Aorta (tissue), 5 donors: ENCODE measurements at regions of chr12 and their contacts with region 1.

Region 1: GRCh38 chr12:6268484-6269157 is 41.9 kb upstream of the PLEKHG6 start:
- DNase-seq: peak in 1 of 2 donors; percentile 83
- ATAC-seq: no peak
- H3K4me3 ChIP-seq: no peak overlapping the region
- H3K27ac ChIP-seq: no peak overlapping the region
- H3K4me1 ChIP-seq: no peaks in the 10 kb centered on the region
- H3K27me3 ChIP-seq: no peaks in the 10 kb centered on the region

Region 2: GRCh38 chr12:6224550-6224949 is 44.1 kb before region 1 on chr12:
- intact Hi-C with region 1: no loop called
- DNase-seq: peak; percentile 89 to 90
- ATAC-seq: peak; percentile 51
- H3K4me3 ChIP-seq: no peak overlapping the region
- H3K27ac ChIP-seq: peak overlapping the region; percentile 95 to 96
- H3K4me1 ChIP-seq: peaks cover 9 to 10% of the 10 kb centered on the region in 2 donors
- H3K27me3 ChIP-seq: no peaks in the 10 kb centered on the region

Region 3: DNA sequence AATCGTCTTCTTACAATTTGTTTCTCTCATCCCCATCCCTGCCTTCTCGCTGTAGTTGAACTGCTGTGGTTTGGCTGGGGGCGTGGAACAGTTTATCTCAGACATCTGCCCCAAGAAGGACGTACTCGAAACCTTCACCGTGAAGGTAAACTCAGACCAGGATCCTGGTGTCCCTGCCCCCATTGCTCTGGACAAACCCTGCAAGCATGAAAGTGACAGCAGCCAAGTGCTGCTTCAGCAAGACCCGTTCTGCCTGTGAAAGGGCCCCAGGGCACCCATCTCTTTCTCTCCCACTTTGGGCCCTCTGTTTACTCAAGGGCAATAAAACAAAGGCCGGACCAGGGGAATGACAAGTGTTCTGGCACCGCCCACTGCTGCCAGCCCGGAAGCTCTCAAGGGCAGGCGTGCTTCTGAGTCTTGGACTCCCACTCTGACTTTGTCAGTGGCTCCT is 33.2 kb before region 1 on chr12:
- intact Hi-C with region 1: loop called in 1 of 2 experiments (anchors 2 kb)
- DNase-seq: peak in 1 of 2 donors; percentile 37
- ATAC-seq: no peak
- H3K4me3 ChIP-seq: no peak overlapping the region
- H3K27ac ChIP-seq: no peak overlapping the region
- H3K4me1 ChIP-seq: peaks cover 0 to 1% of the 10 kb centered on the region in 2 donors
- H3K27me3 ChIP-seq: no peaks in the 10 kb centered on the region

Region 4: DNA sequence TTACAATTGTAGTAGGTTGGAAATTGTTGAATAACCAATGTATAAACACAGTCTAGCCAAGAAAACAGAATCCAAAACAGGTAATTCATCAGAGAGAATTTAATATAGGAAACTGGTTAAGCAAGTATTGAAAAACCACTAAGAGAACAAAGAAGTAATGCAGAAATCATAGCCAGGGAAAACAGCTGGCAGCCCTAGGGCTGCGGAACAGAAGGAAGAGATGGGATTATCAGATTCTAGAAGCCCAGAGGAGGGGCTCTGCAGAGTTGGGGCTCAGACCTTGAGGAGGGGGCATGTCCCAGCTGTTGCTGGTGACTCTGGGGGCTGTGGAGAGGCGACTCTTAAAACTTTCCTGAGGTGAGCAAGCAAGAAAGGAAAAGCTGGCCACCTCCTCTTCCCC is 19.0 kb before region 1 on chr12:
- intact Hi-C with region 1: no loop called
- DNase-seq: peak in 1 of 2 donors; percentile 17
- ATAC-seq: no peak
- H3K4me3 ChIP-seq: no peak overlapping the region
- H3K27ac ChIP-seq: no peak overlapping the region
- H3K4me1 ChIP-seq: no peaks in the 10 kb centered on the region
- H3K27me3 ChIP-seq: no peaks in the 10 kb centered on the region